ENCODE measurements at regions of chr1 and their contacts with region 1.

Region 1: GRCh38 chr1:58652651-58653184 is 47.1 kb downstream of the MYSM1 start:
- DNase-seq: no peak
- H3K4me3 ChIP-seq: peak overlapping the region in 1 of 4 donors; percentile 1
- H3K27ac ChIP-seq: peak overlapping the region in 2 of 4 donors; percentile 3 to 54
- H3K4me1 ChIP-seq: peaks cover 0 to 25% (median 0%) of the 10 kb centered on the region in 3 donors
- H3K27me3 ChIP-seq: no peaks in the 10 kb centered on the region
- CTCF ChIP-seq: peak; percentile 58 to 93 (median 86)
- POLR2A ChIP-seq: no peak

Region 2: GRCh38 chr1:58477390-58477789 is 175.3 kb before region 1 on chr1:
- intact Hi-C with region 1: no loop called
- DNase-seq: no peak
- H3K4me3 ChIP-seq: no peak overlapping the region
- H3K27ac ChIP-seq: no peak overlapping the region
- H3K4me1 ChIP-seq: no peaks in the 10 kb centered on the region
- H3K27me3 ChIP-seq: no peaks in the 10 kb centered on the region
- CTCF ChIP-seq: no peak
- POLR2A ChIP-seq: no peak

Region 3: GRCh38 chr1:58515794-58516401 is 136.8 kb before region 1 on chr1:
- intact Hi-C with region 1: loop called (anchors 5 kb)
- DNase-seq: no peak
- H3K4me3 ChIP-seq: no peak overlapping the region
- H3K27ac ChIP-seq: peak overlapping the region in 2 of 4 donors; percentile 34 to 37
- H3K4me1 ChIP-seq: peaks cover 0 to 11% (median 0%) of the 10 kb centered on the region in 3 donors
- H3K27me3 ChIP-seq: no peaks in the 10 kb centered on the region
- CTCF ChIP-seq: peak in 5 of 6 experiments; percentile 59 to 83 (median 77)
- POLR2A ChIP-seq: no peak

Region 4: GRCh38 chr1:58546520-58547308 is 106.0 kb before region 1 on chr1 and contains the start of gene OMA1:
- intact Hi-C with region 1: loop called (anchors 10 kb)
- DNase-seq: peak; percentile 76
- H3K4me3 ChIP-seq: peak within 1 kb of the TSS; percentile 82 to 92 (median 86)
- H3K27ac ChIP-seq: peak within 1 kb of the TSS; percentile 99 to 100 (median 100)
- H3K4me1 ChIP-seq: peaks cover 0 to 28% (median 6%) of the 10 kb centered on the region in 3 donors
- H3K27me3 ChIP-seq: no peaks in the 10 kb centered on the region
- CTCF ChIP-seq: peak; percentile 92 to 99 (median 98)
- POLR2A ChIP-seq: peak in 3 of 4 donors; percentile 89 to 95 (median 90)
- total RNA-seq, gene OMA1: 24.1 to 41.4 (median 30.5) TPM

Region 5: GRCh38 chr1:58874757-58875755 is 222.3 kb after region 1 on chr1:
- intact Hi-C with region 1: no loop called
- DNase-seq: no peak
- H3K4me3 ChIP-seq: no peak overlapping the region
- H3K27ac ChIP-seq: peak overlapping the region in 3 of 4 donors; percentile 48 to 63 (median 63)
- H3K4me1 ChIP-seq: peaks cover 7 to 24% (median 13%) of the 10 kb centered on the region in 3 donors
- H3K27me3 ChIP-seq: no peaks in the 10 kb centered on the region
- CTCF ChIP-seq: no peak
- POLR2A ChIP-seq: no peak

Measured in esophagus squamous epithelium (tissue), 5 donors.